H1 (cell line): ENCODE measurements at regions of chr11 and their contacts with region 1.

Region 1: GRCh38 chr11:131408025-131408640 is 37.7 kb downstream of the NTM start:
- DNase-seq: peak; percentile 23 to 59
- H3K4me3 ChIP-seq: no peak overlapping the region
- H3K27ac ChIP-seq: no peak overlapping the region
- H3K4me1 ChIP-seq: peaks cover 0 to 3% (median 1%) of the 10 kb centered on the region in 4 experiments; a peak in 3 of 7 replicates
- H3K27me3 ChIP-seq: no peaks in the 10 kb centered on the region
- CTCF ChIP-seq: peak; percentile 76 to 83 (median 79)
- EP300 ChIP-seq: no peak
- POLR2A ChIP-seq: no peak
- RAD21 ChIP-seq: peak; percentile 78 to 80

Region 2: GRCh38 chr11:131418189-131418588 is 10.1 kb after region 1 on chr11:
- CTCF ChIA-PET with region 1: interaction called, 14 read pairs
- POLR2A ChIA-PET with region 1: no interaction called
- DNase-seq: no peak
- H3K4me3 ChIP-seq: no peak overlapping the region
- H3K27ac ChIP-seq: no peak overlapping the region
- H3K4me1 ChIP-seq: peaks cover 0 to 4% (median 0%) of the 10 kb centered on the region in 4 experiments; a peak in 1 of 7 replicates
- H3K27me3 ChIP-seq: no peaks in the 10 kb centered on the region
- CTCF ChIP-seq: no peak
- EP300 ChIP-seq: no peak
- POLR2A ChIP-seq: no peak
- RAD21 ChIP-seq: peak; percentile 24 to 40; a peak in 3 of 4 replicates